ENCODE measurements at regions of chr2 and their contacts with region 1.

Region 1: DNA sequence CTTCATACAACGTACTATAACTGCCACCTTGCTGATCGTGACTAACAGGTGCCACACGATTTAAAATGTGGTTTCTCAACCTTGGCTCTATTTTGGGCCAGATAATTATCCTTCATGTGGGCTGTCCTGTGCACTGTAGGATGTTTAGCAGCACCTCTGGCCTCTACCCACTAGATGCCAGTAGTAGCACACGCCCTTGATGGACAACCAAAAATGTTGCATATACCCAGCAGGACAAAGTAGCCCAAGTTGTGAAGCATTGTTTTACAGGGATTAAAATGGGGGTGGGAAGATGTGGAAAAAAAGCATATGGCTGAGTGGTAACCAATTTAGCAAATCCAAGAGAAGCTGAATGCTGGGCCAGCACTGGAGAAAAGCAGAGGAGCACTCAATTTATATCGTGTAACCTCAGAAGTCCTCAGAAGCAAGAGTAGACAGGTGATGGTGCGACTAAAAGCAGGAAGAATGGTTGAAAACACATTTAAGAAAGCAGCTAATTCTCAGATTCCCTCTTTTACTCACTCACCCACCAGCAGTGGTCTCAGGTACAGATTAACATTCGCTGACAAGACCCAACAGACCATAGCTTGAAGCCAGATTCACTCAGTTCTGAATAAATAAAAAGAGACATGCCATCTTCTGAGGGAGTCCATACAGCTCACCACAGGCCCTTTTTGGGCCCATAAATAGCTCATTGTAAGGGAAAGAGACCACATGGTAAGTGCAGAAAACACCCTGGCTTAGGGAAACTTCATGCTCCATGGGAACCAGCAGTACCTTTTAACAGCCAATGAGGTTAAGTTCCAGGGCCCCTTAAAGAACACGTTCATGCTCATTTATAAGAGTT is 50.6 kb downstream of the RAPH1 start:
- H3K4me3 Mint-ChIP-seq: no peak overlapping the region
- H3K27ac Mint-ChIP-seq: no peak overlapping the region
- H3K4me1 Mint-ChIP-seq: no peaks in the 10 kb centered on the region
- H3K27me3 Mint-ChIP-seq: no peaks in the 10 kb centered on the region

Region 2: GRCh38 chr2:203446071-203446481 is 38.4 kb before region 1 on chr2:
- intact Hi-C with region 1: no loop called
- H3K4me3 Mint-ChIP-seq: no peak overlapping the region
- H3K27ac Mint-ChIP-seq: no peak overlapping the region
- H3K4me1 Mint-ChIP-seq: peaks cover 16% of the 10 kb centered on the region
- H3K27me3 Mint-ChIP-seq: no peaks in the 10 kb centered on the region

Region 3: DNA sequence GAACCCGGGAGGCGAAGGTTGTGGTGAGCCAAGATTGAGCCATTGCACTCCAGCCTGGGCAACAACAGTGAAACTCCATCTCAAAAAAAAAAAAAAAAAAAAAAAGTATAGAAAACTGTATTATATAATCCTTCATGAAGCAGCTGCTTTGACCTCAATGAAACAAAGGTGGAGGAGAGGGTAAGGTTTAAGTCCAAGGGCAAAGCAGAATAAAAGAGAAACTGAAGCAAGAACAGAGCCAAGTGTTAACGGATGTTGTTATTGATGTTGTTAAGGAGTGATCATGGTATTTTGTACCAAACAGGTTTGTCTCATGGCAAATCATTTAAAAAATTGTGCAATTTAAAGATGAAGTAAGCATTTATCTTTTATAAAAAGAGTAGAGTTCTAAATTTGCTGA is 43.2 kb after region 1 on chr2:
- intact Hi-C with region 1: loop called (anchors 5 kb)
- H3K4me3 Mint-ChIP-seq: no peak overlapping the region
- H3K27ac Mint-ChIP-seq: no peak overlapping the region
- H3K4me1 Mint-ChIP-seq: peaks cover 16% of the 10 kb centered on the region
- H3K27me3 Mint-ChIP-seq: peaks cover 12% of the 10 kb centered on the region

Region 4: DNA sequence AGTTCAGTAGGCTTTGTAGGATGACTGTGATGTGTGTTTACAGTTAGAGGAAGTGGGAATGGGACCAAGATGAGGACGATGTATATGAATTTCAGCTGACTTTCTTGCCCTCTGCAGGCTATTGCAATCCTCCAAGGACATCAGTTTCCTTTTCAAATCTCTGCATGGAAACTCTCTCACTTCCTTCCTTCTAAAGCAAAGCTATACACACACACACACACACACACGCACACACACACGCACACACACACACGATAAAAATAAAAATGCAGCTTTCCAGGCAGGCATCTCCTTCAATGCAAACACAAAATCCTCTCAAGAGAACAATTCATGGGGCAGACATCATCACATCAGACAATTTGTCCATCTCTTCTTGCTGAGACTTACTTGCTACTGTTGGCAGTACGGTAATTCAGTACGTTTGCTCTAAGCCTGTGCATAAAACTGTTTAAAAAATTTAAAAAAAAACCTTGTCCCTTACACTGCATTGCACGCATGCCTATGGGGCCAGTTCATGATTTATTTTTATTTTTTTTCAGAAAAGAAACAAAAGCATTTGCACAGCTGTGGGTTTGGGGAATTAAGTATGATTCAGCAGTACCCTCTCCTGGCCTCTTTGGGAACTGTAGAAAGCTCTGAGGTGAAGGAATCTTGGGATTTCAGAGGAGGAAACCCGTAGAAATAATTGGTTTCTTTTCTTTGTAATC is 424.9 kb after region 1 on chr2:
- intact Hi-C with region 1: loop called (anchors 1 kb)
- H3K4me3 Mint-ChIP-seq: peak overlapping the region; percentile 68
- H3K27ac Mint-ChIP-seq: peak overlapping the region; percentile 88
- H3K4me1 Mint-ChIP-seq: peaks cover 22% of the 10 kb centered on the region
- H3K27me3 Mint-ChIP-seq: no peaks in the 10 kb centered on the region